ENCODE measurements at regions of chr11 and their contacts with region 1.

Region 1: DNA sequence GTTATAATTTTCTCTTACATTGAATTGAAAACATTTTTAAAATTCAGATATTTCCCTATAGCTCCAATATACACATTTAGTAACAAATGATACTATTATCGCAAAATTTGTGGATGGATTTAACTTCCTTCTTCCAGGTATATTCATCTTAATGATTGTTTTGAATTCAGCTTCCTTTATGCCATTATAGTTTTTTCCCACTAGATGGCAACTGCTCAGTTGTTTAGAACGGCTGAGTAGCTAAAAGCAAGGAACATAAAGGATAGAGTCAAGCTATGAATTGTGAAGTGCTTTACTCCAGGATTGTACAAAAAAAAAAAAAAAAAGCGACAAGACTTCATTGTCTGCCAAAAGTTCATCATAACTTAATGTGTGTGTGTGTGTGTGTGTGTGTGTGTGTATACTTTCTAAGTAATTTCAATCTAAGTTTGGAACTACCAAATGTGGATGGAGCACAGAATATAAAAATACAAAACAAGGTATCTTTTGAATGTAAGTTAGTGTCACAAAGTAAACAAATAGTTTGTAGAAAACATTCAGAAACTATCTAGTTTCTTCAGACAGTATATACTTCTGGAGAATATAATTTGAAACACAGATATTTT is 846.4 kb downstream of the DLG2 start:
- DNase-seq: no peak
- ATAC-seq: peak; percentile 69
- H3K4me3 Mint-ChIP-seq: no peak overlapping the region
- H3K27ac Mint-ChIP-seq: no peak overlapping the region
- H3K4me1 Mint-ChIP-seq: no peaks in the 10 kb centered on the region
- H3K27me3 Mint-ChIP-seq: no peaks in the 10 kb centered on the region
- CTCF ChIP-seq: no peak

Region 2: DNA sequence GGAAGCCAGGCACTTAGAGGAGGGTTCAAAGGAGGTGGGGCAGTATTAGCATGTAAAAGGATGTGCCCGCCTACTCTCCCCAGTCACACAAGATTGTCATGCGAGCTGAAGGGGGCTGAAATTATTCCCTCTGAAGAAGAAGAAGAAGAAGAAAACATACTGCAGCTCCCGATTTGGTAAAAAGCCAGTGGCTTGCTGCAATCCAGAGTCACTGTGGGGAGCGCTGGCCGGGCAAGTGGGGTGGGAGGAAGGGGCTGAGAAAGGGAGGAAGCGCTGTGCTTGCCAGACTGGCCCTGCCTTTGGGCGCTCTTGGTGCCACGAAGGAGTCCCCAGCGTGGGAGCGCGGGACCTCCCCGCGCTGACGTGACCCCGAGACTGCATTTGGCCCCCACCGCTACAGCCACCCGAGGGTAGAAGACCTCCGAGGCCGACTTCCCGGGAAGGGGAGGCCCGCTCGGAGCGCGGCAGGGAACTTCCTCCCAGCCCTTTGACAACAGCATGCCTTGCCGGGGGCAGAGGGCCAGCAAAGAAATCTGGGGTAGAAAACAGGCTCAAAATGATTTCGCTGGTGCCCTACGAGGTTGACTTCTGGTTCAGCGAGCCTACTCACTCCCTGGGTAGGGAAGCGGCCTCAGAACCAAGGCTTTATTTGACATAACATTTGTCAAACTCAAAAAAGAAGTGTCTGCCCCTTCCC is 59.9 kb before region 1 on chr11:
- CTCF ChIA-PET with region 1: interaction called, 13 read pairs
- POLR2A ChIA-PET with region 1: no interaction called
- DNase-seq: peak; percentile 38
- ATAC-seq: peak; percentile 62
- H3K4me3 Mint-ChIP-seq: peak overlapping the region; percentile 87
- H3K27ac Mint-ChIP-seq: peak overlapping the region; percentile 61; the same call in 1 of the 2 replicates
- H3K4me1 Mint-ChIP-seq: peaks cover 35% of the 10 kb centered on the region
- H3K27me3 Mint-ChIP-seq: peaks cover 20% of the 10 kb centered on the region
- CTCF ChIP-seq: no peak

Region 3: GRCh38 chr11:84890676-84891075 is 109.9 kb after region 1 on chr11:
- CTCF ChIA-PET with region 1: no interaction called
- POLR2A ChIA-PET with region 1: no interaction called
- DNase-seq: no peak
- ATAC-seq: no peak
- H3K4me3 Mint-ChIP-seq: no peak overlapping the region
- H3K27ac Mint-ChIP-seq: no peak overlapping the region
- H3K4me1 Mint-ChIP-seq: no peaks in the 10 kb centered on the region
- H3K27me3 Mint-ChIP-seq: no peaks in the 10 kb centered on the region
- CTCF ChIP-seq: no peak

Region 4: DNA sequence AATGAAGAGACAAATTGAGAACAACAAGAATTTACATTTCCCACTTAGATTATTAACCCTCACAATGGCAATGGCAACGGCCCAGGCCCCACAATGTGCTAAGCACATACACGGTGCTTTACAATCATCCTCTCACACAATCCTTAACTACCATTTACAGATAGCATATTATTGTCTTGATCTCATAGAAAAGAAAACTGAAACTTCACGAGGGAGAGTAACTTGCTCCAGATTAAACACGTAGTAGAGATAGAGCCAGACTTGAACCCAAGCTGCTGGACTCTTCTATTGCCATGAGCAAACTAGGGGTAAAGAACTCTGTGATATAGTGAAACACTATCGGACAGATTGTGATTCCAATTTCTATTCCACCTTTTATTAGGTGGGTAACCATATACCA is 181.2 kb after region 1 on chr11:
- CTCF ChIA-PET with region 1: interaction called, 11 read pairs
- POLR2A ChIA-PET with region 1: no interaction called
- DNase-seq: no peak
- ATAC-seq: no peak
- H3K4me3 Mint-ChIP-seq: no peak overlapping the region
- H3K27ac Mint-ChIP-seq: no peak overlapping the region
- H3K4me1 Mint-ChIP-seq: peaks cover 17% of the 10 kb centered on the region
- H3K27me3 Mint-ChIP-seq: no peaks in the 10 kb centered on the region
- CTCF ChIP-seq: no peak

Measured in WTC11 (cell line).